ENCODE measurements at regions of chr10 and their contacts with region 1.

Region 1: GRCh38 chr10:59625721-59626522 is 83.7 kb downstream of the SLC16A9 start:
- DNase-seq: no peak
- ATAC-seq: peak; percentile 88
- H3K4me3 ChIP-seq: no peak overlapping the region
- H3K27ac ChIP-seq: no peak overlapping the region
- H3K4me1 ChIP-seq: peaks cover 0 to 2% of the 10 kb centered on the region in 2 donors
- H3K27me3 ChIP-seq: no peaks in the 10 kb centered on the region

Region 2: GRCh38 chr10:58775960-58776567 is 849.9 kb before region 1 on chr10:
- intact Hi-C with region 1: loop called (anchors 5 to 10 kb)
- DNase-seq: no peak
- ATAC-seq: peak; percentile 71
- H3K4me3 ChIP-seq: no peak overlapping the region
- H3K27ac ChIP-seq: no peak overlapping the region
- H3K4me1 ChIP-seq: peaks cover 0 to 3% of the 10 kb centered on the region in 2 donors
- H3K27me3 ChIP-seq: no peaks in the 10 kb centered on the region

Region 3: DNA sequence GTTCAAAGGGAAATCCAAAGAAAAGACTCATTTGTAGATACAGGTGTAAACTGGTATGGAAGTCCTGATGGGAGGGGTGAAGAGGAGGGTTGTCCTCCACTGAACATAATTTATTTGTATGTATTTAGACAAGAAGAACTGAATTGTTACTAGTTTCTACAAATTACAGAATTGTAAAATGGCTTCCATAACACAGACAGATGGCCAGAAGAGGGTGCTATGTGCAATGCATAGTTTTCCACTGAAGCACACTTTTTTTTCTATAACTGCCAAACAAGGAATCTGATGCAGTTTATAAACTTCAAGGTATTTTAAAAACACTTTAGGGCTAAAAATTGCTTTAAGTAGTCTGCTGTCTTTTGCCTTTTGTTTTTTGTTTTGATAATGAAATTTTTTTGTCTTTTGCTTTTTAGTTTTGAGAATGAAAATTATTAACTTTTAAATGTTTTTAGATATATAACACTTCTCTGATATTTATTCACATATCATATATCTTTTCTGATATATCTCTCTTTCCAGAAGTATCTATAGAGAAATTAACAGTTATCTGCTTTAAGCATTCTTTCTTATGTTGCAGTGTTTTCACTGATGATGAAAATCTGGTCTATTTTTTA is 391.0 kb before region 1 on chr10:
- intact Hi-C with region 1: loop called (anchors 2 to 5 kb)
- DNase-seq: no peak
- ATAC-seq: no peak
- H3K4me3 ChIP-seq: no peak overlapping the region
- H3K27ac ChIP-seq: no peak overlapping the region
- H3K4me1 ChIP-seq: no peaks in the 10 kb centered on the region
- H3K27me3 ChIP-seq: no peaks in the 10 kb centered on the region

Region 4: GRCh38 chr10:59808896-59809643 is 183.1 kb after region 1 on chr10:
- intact Hi-C with region 1: loop called (anchors 5 to 10 kb)
- DNase-seq: peak; percentile 84 to 89
- ATAC-seq: peak; percentile 67
- H3K4me3 ChIP-seq: no peak overlapping the region
- H3K27ac ChIP-seq: no peak overlapping the region
- H3K4me1 ChIP-seq: peaks cover 0 to 5% of the 10 kb centered on the region in 2 donors
- H3K27me3 ChIP-seq: no peaks in the 10 kb centered on the region

Region 5: GRCh38 chr10:59906417-59907202 is 280.7 kb after region 1 on chr10 and contains the start of gene CCDC6:
- intact Hi-C with region 1: loop called (anchors 5 to 10 kb)
- DNase-seq: peak; percentile 96 to 98
- ATAC-seq: peak; percentile 95
- H3K4me3 ChIP-seq: peak within 1 kb of the TSS; percentile 82 to 94
- H3K27ac ChIP-seq: peak within 1 kb of the TSS; percentile 64 to 81
- H3K4me1 ChIP-seq: peaks cover 1 to 2% of the 10 kb centered on the region in 2 donors
- H3K27me3 ChIP-seq: no peaks in the 10 kb centered on the region
- total RNA-seq, gene CCDC6: 78.0 to 90.0 TPM

Region 6: DNA sequence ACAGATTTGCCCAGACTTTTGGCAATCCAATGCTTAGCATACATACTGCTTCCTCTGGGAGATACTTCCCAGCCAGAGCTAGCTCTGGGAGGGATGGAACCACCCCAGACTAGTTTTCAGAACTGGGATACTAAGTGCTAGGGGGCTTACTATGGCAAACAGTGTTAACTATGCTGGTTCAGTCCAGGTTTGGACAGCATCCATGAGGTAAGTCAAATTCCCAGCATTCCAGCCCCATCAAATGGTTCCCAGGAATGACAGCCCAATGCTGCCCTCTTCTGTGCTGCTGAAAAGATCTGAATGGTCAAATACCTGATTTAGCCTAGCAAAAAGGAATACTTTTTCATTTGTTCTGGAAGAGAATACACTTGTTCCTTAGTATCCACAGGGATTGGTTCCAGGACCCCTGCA is 422.2 kb after region 1 on chr10:
- intact Hi-C with region 1: loop called (anchors 5 kb)
- DNase-seq: no peak
- ATAC-seq: no peak
- H3K4me3 ChIP-seq: no peak overlapping the region
- H3K27ac ChIP-seq: no peak overlapping the region
- H3K4me1 ChIP-seq: peaks cover 0 to 1% of the 10 kb centered on the region in 2 donors
- H3K27me3 ChIP-seq: no peaks in the 10 kb centered on the region